Activated B cell treated with CpG ODN at 0.5 μM for 24 hours (primary cell): ENCODE measurements at regions of chr17 and their contacts with region 1.

Region 1: GRCh38 chr17:5237541-5238016 is 2.9 kb upstream of the SCIMP start:
- DNase-seq: no peak
- ATAC-seq: peak; percentile 18
- H3K4me3 Mint-ChIP-seq: peak overlapping the region; percentile 36
- H3K27ac Mint-ChIP-seq: peak overlapping the region; percentile 98
- H3K4me1 Mint-ChIP-seq: peaks cover 78% of the 10 kb centered on the region
- H3K27me3 Mint-ChIP-seq: no peaks in the 10 kb centered on the region
- CTCF ChIP-seq: no peak

Region 2: DNA sequence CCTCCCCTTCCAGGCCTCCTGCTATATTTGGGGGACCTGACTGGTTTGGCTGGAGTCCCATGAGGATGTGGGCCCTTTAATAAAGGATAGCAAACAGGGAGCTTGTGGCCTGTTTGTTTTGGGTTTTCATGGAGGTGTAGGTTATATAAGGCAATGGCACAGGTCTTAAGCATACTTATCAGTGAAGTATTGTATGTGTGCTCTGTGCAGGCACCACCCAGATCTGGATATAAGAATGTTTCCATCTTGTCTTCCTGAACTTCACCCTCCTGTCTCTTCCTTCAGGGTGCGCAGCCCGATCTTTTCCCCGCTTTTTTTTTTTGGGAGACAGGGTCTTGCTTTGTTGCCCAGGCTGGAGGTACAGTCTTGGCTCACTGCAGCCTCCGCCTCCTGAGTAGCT is 213.0 kb before region 1 on chr17:
- CTCF ChIA-PET with region 1: no interaction called
- POLR2A ChIA-PET with region 1: no interaction called
- intact Hi-C with region 1: no loop called
- DNase-seq: no peak
- ATAC-seq: no peak
- H3K4me3 Mint-ChIP-seq: no peak overlapping the region
- H3K27ac Mint-ChIP-seq: no peak overlapping the region
- H3K4me1 Mint-ChIP-seq: peaks cover 2% of the 10 kb centered on the region
- H3K27me3 Mint-ChIP-seq: no peaks in the 10 kb centered on the region
- CTCF ChIP-seq: no peak

Region 3: DNA sequence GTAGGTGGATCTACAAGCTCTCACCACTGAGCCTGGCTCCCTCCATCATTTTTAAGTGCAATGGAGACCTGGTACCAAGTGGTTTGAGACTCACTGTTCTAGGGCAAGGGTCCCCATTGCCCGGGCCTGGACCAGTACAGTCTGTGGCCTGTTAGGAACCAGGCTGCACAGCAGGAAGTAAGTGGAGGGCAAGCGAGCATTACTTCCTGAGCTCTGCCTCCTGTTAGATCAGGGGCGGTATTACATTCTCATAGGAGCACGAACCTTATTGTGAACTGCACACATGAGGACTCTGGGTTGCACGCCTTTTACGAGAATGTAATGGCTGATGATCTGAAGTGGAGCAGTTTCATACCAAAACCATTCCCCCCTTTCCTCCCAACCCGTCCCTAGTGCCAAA is 39.1 kb before region 1 on chr17:
- CTCF ChIA-PET with region 1: interaction called, 127 read pairs
- POLR2A ChIA-PET with region 1: interaction called, 28 read pairs
- intact Hi-C with region 1: loop called (anchors 1 kb)
- DNase-seq: no peak
- ATAC-seq: peak; percentile 74
- H3K4me3 Mint-ChIP-seq: peak overlapping the region; percentile 41
- H3K27ac Mint-ChIP-seq: peak overlapping the region; percentile 82
- H3K4me1 Mint-ChIP-seq: peaks cover 54% of the 10 kb centered on the region
- H3K27me3 Mint-ChIP-seq: no peaks in the 10 kb centered on the region
- CTCF ChIP-seq: no peak

Region 4: DNA sequence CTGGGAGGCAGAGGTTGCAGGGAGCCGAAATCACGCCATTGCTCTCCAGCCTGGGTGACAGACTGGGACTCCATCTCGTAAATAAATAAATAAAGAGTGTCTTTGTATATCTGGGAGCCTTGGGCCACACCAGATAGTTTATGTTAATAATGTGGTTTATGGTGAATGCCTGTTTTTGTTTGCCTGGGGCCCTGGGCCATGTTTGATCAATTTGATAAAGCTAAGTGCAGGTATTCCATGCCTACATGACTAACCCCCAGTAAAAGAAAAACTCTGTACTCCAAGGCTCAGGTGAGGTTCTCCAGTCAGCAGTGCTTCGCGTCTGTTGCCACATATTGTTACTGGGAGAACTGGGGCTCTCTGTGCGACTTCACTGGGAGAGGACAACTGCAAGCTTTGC is 18.0 kb before region 1 on chr17:
- CTCF ChIA-PET with region 1: interaction called, 16 read pairs
- POLR2A ChIA-PET with region 1: interaction called, 130 read pairs
- intact Hi-C with region 1: loop called (anchors 1 kb)
- DNase-seq: no peak
- ATAC-seq: no peak
- H3K4me3 Mint-ChIP-seq: no peak overlapping the region
- H3K27ac Mint-ChIP-seq: peak overlapping the region; percentile 98
- H3K4me1 Mint-ChIP-seq: peaks cover 63% of the 10 kb centered on the region
- H3K27me3 Mint-ChIP-seq: no peaks in the 10 kb centered on the region
- CTCF ChIP-seq: no peak

Region 5: DNA sequence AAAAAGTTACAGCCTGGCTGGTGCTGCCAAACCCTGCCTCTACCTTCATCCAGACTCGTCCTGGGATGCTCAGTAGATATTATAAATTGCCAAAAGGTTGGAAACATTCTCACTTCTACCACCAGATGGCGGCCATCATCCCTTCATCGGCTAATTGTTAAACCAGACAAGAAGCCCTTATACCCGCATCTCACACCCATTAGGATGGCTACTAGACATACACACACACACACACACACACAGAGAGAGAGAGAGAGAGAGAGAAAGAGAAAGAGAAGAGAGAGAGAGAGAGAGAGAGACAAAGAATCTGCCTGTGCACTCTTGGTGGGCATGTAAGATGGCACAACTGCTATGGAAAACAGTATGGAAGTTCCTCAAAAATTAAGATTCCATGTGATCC is 12.0 kb after region 1 on chr17:
- CTCF ChIA-PET with region 1: interaction called, 10 read pairs
- POLR2A ChIA-PET with region 1: interaction called, 5 read pairs
- intact Hi-C with region 1: no loop called
- DNase-seq: no peak
- ATAC-seq: peak; percentile 91
- H3K4me3 Mint-ChIP-seq: no peak overlapping the region
- H3K27ac Mint-ChIP-seq: peak overlapping the region; percentile 72
- H3K4me1 Mint-ChIP-seq: peaks cover 52% of the 10 kb centered on the region
- H3K27me3 Mint-ChIP-seq: no peaks in the 10 kb centered on the region
- CTCF ChIP-seq: no peak